ENCODE measurements at regions of chr9 and their contacts with region 1.

Region 1: GRCh38 chr9:83334320-83334719 is 203.9 kb downstream of the FRMD3 start:
- DNase-seq: peak; percentile 89
- H3K4me3 Mint-ChIP-seq: no peak overlapping the region
- H3K27ac Mint-ChIP-seq: no peak overlapping the region
- H3K4me1 Mint-ChIP-seq: peaks cover 3% of the 10 kb centered on the region
- H3K27me3 Mint-ChIP-seq: no peaks in the 10 kb centered on the region

Region 2: GRCh38 chr9:83429229-83429628 is 94.9 kb after region 1 on chr9:
- CTCF ChIA-PET with region 1: no interaction called
- intact Hi-C with region 1: no loop called
- DNase-seq: no peak
- H3K4me3 Mint-ChIP-seq: no peak overlapping the region
- H3K27ac Mint-ChIP-seq: no peak overlapping the region
- H3K4me1 Mint-ChIP-seq: no peaks in the 10 kb centered on the region
- H3K27me3 Mint-ChIP-seq: no peaks in the 10 kb centered on the region

Region 3: DNA sequence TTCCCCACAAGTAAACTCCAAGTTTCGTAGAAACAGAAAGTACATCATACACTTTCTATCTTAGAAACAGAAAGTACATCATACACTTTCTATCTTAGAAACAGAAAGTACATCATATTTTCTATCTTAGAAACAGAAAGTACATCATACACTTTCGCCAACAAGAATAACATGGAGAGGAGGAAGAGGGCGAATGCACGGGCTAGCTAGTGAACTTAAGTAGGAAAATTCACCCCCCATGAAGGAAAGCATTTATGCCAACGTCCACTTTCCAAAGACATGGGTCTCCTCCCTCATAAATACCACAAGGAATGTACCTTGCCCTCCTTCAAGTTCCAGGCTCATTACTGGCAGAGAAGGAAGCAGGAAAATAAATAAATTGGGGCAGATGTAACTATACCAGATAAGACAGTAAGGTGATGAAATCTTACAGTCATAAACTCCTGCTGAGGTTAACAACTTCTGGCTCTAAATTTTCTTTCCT is 139.2 kb after region 1 on chr9:
- CTCF ChIA-PET with region 1: interaction called, 4 read pairs
- intact Hi-C with region 1: loop called (anchors 10 kb)
- DNase-seq: no peak
- H3K4me3 Mint-ChIP-seq: peak overlapping the region; percentile 35
- H3K27ac Mint-ChIP-seq: peak overlapping the region; percentile 46
- H3K4me1 Mint-ChIP-seq: peaks cover 28% of the 10 kb centered on the region
- H3K27me3 Mint-ChIP-seq: no peaks in the 10 kb centered on the region

Region 4: GRCh38 chr9:83544002-83544698 is 209.8 kb after region 1 on chr9:
- CTCF ChIA-PET with region 1: interaction called, 117 read pairs
- intact Hi-C with region 1: loop called (anchors 1 kb)
- DNase-seq: no peak
- H3K4me3 Mint-ChIP-seq: no peak overlapping the region
- H3K27ac Mint-ChIP-seq: no peak overlapping the region
- H3K4me1 Mint-ChIP-seq: no peaks in the 10 kb centered on the region
- H3K27me3 Mint-ChIP-seq: peaks cover 14% of the 10 kb centered on the region

Region 5: DNA sequence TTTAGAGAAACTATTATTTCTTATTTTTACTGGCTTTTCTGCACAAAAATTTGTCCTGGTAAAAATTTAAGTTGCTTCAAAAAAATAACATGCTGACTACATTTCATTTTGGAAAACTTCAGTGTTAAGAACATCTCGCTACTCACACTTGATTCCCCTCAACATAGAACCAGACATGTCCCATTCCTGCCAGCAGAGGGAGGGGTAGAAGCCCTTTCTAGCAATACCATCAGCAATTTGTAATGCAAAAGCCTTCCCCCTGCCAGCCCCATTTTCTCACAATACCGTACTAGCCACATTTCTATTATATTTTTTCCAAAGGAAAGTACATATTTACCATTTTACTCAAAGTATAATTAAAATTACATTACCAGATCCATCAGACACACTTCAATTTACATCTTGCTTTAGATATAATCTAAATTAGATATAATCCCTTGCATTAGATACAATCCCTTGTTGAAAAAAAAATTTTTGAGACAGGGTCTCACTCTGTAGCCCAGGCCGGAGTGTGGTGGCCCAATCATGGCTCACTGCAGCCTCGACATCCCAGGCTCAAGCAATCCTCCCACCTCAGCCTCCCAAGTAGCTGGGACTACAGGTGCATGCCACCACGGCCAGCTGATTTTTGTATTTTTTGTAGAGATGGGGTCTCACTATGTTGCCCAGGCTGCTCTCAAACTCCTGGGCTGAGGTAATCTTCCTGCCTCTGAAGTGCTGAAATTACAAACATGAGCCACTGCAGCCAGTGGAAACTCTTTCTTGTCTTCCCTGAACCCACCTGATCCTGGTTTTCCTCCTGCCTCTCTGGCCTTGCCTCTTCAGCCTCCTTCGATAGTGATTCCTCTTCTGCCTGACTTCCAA is 249.1 kb after region 1 on chr9:
- CTCF ChIA-PET with region 1: no interaction called
- intact Hi-C with region 1: no loop called
- DNase-seq: peak; percentile 50
- H3K4me3 Mint-ChIP-seq: no peak overlapping the region
- H3K27ac Mint-ChIP-seq: no peak overlapping the region
- H3K4me1 Mint-ChIP-seq: peaks cover 9% of the 10 kb centered on the region
- H3K27me3 Mint-ChIP-seq: no peaks in the 10 kb centered on the region

Region 6: GRCh38 chr9:83649080-83649479 is 314.8 kb after region 1 on chr9:
- CTCF ChIA-PET with region 1: interaction called, 11 read pairs
- intact Hi-C with region 1: loop called (anchors 1 kb)
- DNase-seq: peak; percentile 82
- H3K4me3 Mint-ChIP-seq: no peak overlapping the region
- H3K27ac Mint-ChIP-seq: no peak overlapping the region
- H3K4me1 Mint-ChIP-seq: peaks cover 3% of the 10 kb centered on the region
- H3K27me3 Mint-ChIP-seq: no peaks in the 10 kb centered on the region